ENCODE measurements at regions of chr17 and their contacts with region 1.

Region 1: GRCh38 chr17:3636154-3636907 is at the starts of genes CTNS and SHPK:
- DNase-seq: peak; percentile 93 to 94
- H3K4me3 ChIP-seq: peak within 1 kb of the TSS; percentile 76
- H3K4me3 Mint-ChIP-seq: peak within 1 kb of the TSS; percentile 81
- H3K27ac Mint-ChIP-seq: peak within 1 kb of the TSS; percentile 99
- H3K4me1 ChIP-seq: no peaks in the 10 kb centered on the region
- H3K4me1 Mint-ChIP-seq: no peaks in the 10 kb centered on the region
- H3K27me3 ChIP-seq: no peaks in the 10 kb centered on the region
- H3K27me3 Mint-ChIP-seq: no peaks in the 10 kb centered on the region
- CTCF ChIP-seq: no peak
- total RNA-seq, gene CTNS: 11.8 and 15.6 TPM in 2 replicates
- total RNA-seq, gene SHPK: 17.4 and 17.7 TPM in 2 replicates

Region 2: GRCh38 chr17:3610523-3610922 is 25.8 kb before region 1 on chr17:
- CTCF ChIA-PET with region 1: no interaction called
- POLR2A ChIA-PET with region 1: interaction called, 7 read pairs
- intact Hi-C with region 1: loop called (anchors 1 kb)
- DNase-seq: no peak
- H3K4me3 ChIP-seq: no peak overlapping the region
- H3K4me3 Mint-ChIP-seq: no peak overlapping the region
- H3K27ac Mint-ChIP-seq: no peak overlapping the region
- H3K4me1 ChIP-seq: peaks cover 10% of the 10 kb centered on the region
- H3K4me1 Mint-ChIP-seq: no peaks in the 10 kb centered on the region
- H3K27me3 ChIP-seq: no peaks in the 10 kb centered on the region
- H3K27me3 Mint-ChIP-seq: no peaks in the 10 kb centered on the region
- CTCF ChIP-seq: no peak